MCF 10A (cell line): ENCODE measurements at regions of chr16 and their contacts with region 1.

Region 1: GRCh38 chr16:705748-706188 is at the start of gene FBXL16:
- DNase-seq: peak; percentile 63
- H3K4me3 Mint-ChIP-seq: peak within 1 kb of the TSS; percentile 83
- H3K27ac Mint-ChIP-seq: peak within 1 kb of the TSS; percentile 67
- H3K4me1 Mint-ChIP-seq: peaks cover 17% of the 10 kb centered on the region
- H3K27me3 Mint-ChIP-seq: no peaks in the 10 kb centered on the region
- CTCF ChIP-seq: no peak
- total RNA-seq, gene FBXL16: 40.5 and 48.2 TPM in 2 replicates

Region 2: DNA sequence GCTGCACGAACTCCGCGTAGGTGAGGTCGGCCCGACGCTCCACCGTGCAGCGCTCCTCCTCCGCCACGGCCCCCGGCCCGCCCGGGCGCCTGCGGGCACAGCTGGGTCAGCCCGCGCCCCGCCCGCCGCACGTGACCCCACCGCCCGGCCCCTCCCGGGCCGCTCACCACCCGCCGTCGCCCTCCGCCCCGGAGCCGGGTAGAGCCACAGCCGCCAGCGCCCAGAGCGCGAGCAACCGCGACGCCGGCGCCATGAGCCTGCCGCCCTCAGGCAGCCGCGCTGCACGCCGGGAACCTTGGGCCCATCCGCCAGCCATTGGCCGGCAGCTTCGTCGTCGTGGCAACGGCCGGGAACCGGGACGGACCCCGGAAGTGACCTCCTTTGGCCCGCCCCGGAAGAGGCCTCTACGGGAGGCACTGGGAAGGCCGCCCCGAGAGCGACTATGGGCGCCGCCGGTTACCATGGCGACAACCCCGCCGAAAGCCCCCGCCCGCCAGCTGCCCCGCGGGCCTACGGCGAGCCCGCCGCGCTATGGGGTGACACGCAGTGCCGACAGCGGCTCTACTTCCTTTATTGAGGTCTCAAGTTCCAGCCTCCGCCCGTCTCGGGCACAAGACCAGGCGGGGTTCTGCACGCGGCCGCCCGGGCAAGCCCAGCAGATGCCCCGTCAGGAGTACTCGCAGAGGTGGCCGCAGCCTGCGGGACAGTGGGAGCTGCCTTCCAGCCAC is 21.5 kb before region 1 on chr16 and contains the start of gene JMJD8:
- CTCF ChIA-PET with region 1: interaction called, 3 read pairs
- POLR2A ChIA-PET with region 1: interaction called, 24 read pairs
- intact Hi-C with region 1: no loop called
- DNase-seq: peak; percentile 95
- H3K4me3 Mint-ChIP-seq: peak within 1 kb of the TSS; percentile 76
- H3K27ac Mint-ChIP-seq: peak within 1 kb of the TSS; percentile 61
- H3K4me1 Mint-ChIP-seq: peaks cover 6% of the 10 kb centered on the region
- H3K27me3 Mint-ChIP-seq: no peaks in the 10 kb centered on the region
- CTCF ChIP-seq: no peak
- total RNA-seq, gene JMJD8: 23.6 and 33.4 TPM in 2 replicates

Region 3: DNA sequence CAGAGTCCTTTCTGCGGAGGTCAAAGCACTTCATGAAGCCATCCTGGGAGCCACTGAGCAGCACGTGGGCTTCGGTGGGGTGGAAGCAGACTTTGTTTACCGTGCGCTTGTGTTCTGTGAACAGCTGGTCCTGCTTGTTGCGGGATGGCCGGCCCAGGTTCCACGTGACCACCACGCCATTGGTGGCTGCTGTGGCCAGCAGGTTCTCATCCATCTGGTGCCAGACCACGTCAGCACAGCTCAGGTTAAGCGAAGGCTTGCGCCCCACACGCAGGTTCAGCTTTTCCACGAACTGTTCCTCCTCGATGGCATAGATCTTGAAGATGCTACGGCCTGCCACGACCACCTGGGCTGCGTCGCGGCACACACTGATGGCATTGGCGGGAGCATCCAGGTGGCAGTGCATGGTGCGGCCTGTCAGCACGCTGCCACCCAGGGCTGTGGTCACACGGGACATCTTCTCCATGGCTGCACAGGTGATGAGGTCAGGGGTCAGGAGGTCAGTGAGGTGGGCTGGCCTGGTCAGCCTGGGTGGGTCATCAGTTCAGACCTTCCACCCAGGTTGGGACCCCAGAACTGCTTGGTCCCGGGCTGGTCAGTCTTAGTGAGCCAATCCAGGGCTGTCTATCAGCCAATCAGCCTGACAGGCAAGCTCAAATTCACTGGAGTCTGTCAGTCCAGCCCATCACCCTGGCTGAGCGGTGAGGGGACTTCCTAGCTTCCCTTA is 16.4 kb before region 1 on chr16:
- CTCF ChIA-PET with region 1: interaction called, 3 read pairs
- POLR2A ChIA-PET with region 1: interaction called, 24 read pairs
- intact Hi-C with region 1: no loop called
- DNase-seq: no peak
- H3K4me3 Mint-ChIP-seq: peak overlapping the region; percentile 87
- H3K27ac Mint-ChIP-seq: peak overlapping the region; percentile 86
- H3K4me1 Mint-ChIP-seq: peaks cover 10% of the 10 kb centered on the region
- H3K27me3 Mint-ChIP-seq: no peaks in the 10 kb centered on the region
- CTCF ChIP-seq: no peak

Region 4: GRCh38 chr16:695355-696089 is 10.2 kb before region 1 on chr16:
- CTCF ChIA-PET with region 1: interaction called, 3 read pairs
- POLR2A ChIA-PET with region 1: interaction called, 25 read pairs
- intact Hi-C with region 1: no loop called
- DNase-seq: peak; percentile 87
- H3K4me3 Mint-ChIP-seq: peak overlapping the region; percentile 41
- H3K27ac Mint-ChIP-seq: no peak overlapping the region
- H3K4me1 Mint-ChIP-seq: peaks cover 10% of the 10 kb centered on the region
- H3K27me3 Mint-ChIP-seq: no peaks in the 10 kb centered on the region
- CTCF ChIP-seq: no peak

Region 5: GRCh38 chr16:728131-728889 is 22.5 kb after region 1 on chr16:
- CTCF ChIA-PET with region 1: interaction called, 5 read pairs
- POLR2A ChIA-PET with region 1: interaction called, 124 read pairs
- intact Hi-C with region 1: no loop called
- DNase-seq: peak; percentile 82
- H3K4me3 Mint-ChIP-seq: peak overlapping the region; percentile 65
- H3K27ac Mint-ChIP-seq: no peak overlapping the region
- H3K4me1 Mint-ChIP-seq: no peaks in the 10 kb centered on the region
- H3K27me3 Mint-ChIP-seq: no peaks in the 10 kb centered on the region
- CTCF ChIP-seq: no peak

Region 6: DNA sequence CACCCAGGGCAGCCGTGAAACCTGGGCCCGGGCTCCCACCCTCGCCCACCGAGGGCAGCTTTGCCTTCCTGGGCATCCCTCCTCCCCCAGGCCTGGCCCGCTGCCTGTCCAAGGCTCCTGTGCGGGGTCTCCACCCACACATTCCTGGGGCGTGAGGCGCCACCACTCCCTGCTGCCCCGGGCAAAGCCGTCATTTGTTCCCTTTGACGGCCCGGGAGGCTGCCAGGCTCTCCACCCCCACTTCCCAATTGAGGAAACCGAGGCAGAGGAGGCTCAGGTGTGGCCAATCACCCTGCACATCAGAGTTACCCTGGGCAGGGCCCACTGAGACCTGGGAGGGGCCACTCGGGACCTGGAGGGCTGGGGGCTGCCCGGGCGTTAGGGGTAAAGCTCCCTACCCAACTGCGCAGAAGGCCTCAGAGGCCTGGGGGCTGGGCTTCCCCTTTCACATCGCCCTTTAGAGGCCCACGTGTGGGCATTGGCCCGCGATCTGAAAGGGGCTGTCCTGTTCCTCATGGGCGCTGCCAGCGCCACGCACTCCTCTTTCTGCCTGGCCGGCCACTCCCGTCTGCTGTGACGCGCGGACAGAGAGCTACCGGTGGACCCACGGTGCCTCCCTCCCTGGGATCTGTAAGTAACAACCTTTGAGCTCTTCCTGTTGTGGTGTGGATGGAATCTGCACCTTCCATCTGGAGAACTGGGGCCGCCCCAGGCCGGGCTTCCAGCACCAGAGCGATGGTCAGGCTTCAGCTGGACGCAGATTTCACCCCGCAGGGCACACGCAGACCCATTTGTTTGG is 55.0 kb after region 1 on chr16 and contains the start of gene MSLN:
- CTCF ChIA-PET with region 1: no interaction called
- POLR2A ChIA-PET with region 1: interaction called, 12 read pairs
- intact Hi-C with region 1: no loop called
- DNase-seq: peak; percentile 76
- H3K4me3 Mint-ChIP-seq: peak within 1 kb of the TSS; percentile 60
- H3K27ac Mint-ChIP-seq: peak within 1 kb of the TSS; percentile 61
- H3K4me1 Mint-ChIP-seq: peaks cover 10% of the 10 kb centered on the region
- H3K27me3 Mint-ChIP-seq: no peaks in the 10 kb centered on the region
- CTCF ChIP-seq: no peak
- total RNA-seq, gene MSLN: 18.1 and 25.2 TPM in 2 replicates

Region 7: DNA sequence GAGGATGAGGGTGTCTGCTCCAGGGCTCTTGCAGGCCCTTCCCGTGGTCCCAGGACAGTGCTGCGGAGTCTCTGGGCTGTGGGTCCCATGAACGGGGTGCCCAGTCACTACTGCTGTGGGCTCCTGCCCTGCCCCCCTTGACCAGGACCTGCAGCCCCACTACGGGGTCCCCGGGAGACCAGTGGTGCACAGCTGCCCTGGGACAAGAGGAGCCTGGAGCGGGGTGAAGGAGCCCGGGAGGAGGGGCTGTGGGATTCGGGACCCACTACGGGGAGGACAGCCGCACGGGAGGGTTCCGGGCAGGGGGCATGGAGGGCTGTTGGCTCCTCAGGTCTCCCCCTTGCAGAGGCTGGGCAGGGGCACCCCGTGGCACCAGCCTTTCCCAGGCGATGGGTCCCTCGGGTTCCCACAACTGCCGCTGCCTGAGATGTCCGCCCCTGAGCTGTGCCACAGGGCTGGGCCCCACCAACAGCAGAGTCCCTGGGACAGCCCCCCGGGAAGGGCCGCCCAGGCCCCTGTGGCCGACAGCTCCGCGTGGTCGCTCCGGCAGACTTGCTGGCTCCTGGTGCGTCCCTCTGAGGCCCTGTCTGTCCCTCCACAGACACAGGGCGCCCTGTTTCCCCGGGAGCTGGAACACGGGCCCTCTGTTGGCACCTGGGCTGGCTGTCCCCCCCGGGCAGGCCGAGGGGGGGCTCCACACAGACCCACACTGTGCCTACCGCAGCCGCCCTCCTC is 146.8 kb after region 1 on chr16:
- CTCF ChIA-PET with region 1: no interaction called
- POLR2A ChIA-PET with region 1: no interaction called
- intact Hi-C with region 1: no loop called
- DNase-seq: no peak
- H3K4me3 Mint-ChIP-seq: no peak overlapping the region
- H3K27ac Mint-ChIP-seq: no peak overlapping the region
- H3K4me1 Mint-ChIP-seq: no peaks in the 10 kb centered on the region
- H3K27me3 Mint-ChIP-seq: no peaks in the 10 kb centered on the region
- CTCF ChIP-seq: no peak